A673 (cell line): ENCODE measurements at regions of chr1 and their contacts with region 1.

Region 1: GRCh38 chr1:173202430-173203145 is 4.5 kb downstream of the TNFSF4 start:
- DNase-seq: peak; percentile 69
- H3K4me3 ChIP-seq: no peak overlapping the region
- H3K27ac ChIP-seq: no peak overlapping the region
- H3K4me1 ChIP-seq: peaks cover 15% of the 10 kb centered on the region
- H3K27me3 ChIP-seq: no peaks in the 10 kb centered on the region
- CTCF ChIP-seq: peak; percentile 74

Region 2: GRCh38 chr1:173275496-173275895 is 72.9 kb after region 1 on chr1:
- CTCF ChIA-PET with region 1: no interaction called
- POLR2A ChIA-PET with region 1: no interaction called
- intact Hi-C with region 1: loop called (anchors 2 kb)
- DNase-seq: no peak
- H3K4me3 ChIP-seq: no peak overlapping the region
- H3K27ac ChIP-seq: no peak overlapping the region
- H3K4me1 ChIP-seq: no peaks in the 10 kb centered on the region
- H3K27me3 ChIP-seq: no peaks in the 10 kb centered on the region
- CTCF ChIP-seq: no peak

Region 3: DNA sequence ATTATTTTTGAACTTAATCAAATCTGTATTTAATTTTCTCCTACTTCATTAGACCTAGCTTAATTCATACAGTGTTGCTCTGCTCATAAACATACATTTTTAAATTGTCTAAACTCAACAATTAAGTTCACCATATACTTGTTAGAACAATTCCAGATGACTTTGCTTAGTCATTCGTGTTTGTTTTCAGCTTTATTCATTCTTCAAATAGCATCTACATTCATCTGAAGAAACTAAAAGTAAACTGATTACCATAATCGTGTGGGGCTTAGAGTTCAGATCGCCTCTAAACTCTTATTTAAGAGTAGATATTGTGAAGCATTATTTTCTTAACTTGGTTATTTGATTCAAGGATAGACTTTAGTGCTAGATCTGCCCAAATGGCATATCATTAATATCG is 546.5 kb after region 1 on chr1:
- CTCF ChIA-PET with region 1: no interaction called
- POLR2A ChIA-PET with region 1: no interaction called
- intact Hi-C with region 1: no loop called
- DNase-seq: no peak
- H3K4me3 ChIP-seq: no peak overlapping the region
- H3K27ac ChIP-seq: no peak overlapping the region
- H3K4me1 ChIP-seq: no peaks in the 10 kb centered on the region
- H3K27me3 ChIP-seq: no peaks in the 10 kb centered on the region
- CTCF ChIP-seq: no peak